Pancreas (tissue), 10 donors: ENCODE measurements at regions of chr3 and their contacts with region 1.

Region 1: GRCh38 chr3:172094621-172095557 is 55.5 kb downstream of the FNDC3B start:
- DNase-seq: no peak
- ATAC-seq: no peak
- H3K4me3 ChIP-seq: no peak overlapping the region
- H3K27ac ChIP-seq: peak overlapping the region in 2 of 4 donors; percentile 10 to 74
- H3K4me1 ChIP-seq: peaks cover 26 to 51% (median 40%) of the 10 kb centered on the region in 3 donors
- H3K27me3 ChIP-seq: no peaks in the 10 kb centered on the region
- CTCF ChIP-seq: no peak

Region 2: GRCh38 chr3:172039436-172040077 is 55.3 kb before region 1 on chr3 and contains the start of gene FNDC3B:
- intact Hi-C with region 1: loop called in 1 of 3 experiments (anchors 10 kb)
- DNase-seq: peak; percentile 90 to 95 (median 93)
- ATAC-seq: peak; percentile 74 to 89 (median 82)
- H3K4me3 ChIP-seq: peak within 1 kb of the TSS; percentile 90 to 100 (median 97)
- H3K27ac ChIP-seq: peak within 1 kb of the TSS; percentile 94 to 100 (median 99)
- H3K4me1 ChIP-seq: peaks cover 8 to 21% (median 11%) of the 10 kb centered on the region in 3 donors
- H3K27me3 ChIP-seq: no peaks in the 10 kb centered on the region
- CTCF ChIP-seq: no peak
- total RNA-seq, gene FNDC3B: 67.5 to 126 (median 79.0) TPM

Region 3: DNA sequence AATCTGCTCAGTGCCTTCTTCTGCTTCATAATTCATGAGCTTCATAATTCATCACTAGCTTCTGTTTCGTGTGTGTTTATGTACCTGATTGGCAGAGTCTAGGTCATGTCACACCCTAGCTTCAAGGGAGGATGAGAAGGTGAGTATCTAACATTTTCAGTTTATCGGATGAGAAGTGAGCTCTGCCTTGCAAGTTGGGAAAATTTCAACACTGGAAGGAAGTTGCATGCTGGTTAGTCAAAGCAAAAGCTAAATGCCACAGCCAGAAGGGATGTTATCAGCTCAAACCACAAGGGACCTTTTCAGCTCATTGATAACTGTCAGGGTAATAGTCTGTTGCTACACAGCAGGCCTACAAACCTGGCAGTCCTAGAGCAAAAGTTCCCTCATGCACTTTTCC is 435.7 kb after region 1 on chr3:
- intact Hi-C with region 1: no loop called
- DNase-seq: no peak
- ATAC-seq: peak in 3 of 4 donors; percentile 36 to 73 (median 59)
- H3K4me3 ChIP-seq: no peak overlapping the region
- H3K27ac ChIP-seq: no peak overlapping the region
- H3K4me1 ChIP-seq: no peaks in the 10 kb centered on the region
- H3K27me3 ChIP-seq: no peaks in the 10 kb centered on the region
- CTCF ChIP-seq: no peak